ENCODE measurements at regions of chr20 and their contacts with region 1.

Region 1: DNA sequence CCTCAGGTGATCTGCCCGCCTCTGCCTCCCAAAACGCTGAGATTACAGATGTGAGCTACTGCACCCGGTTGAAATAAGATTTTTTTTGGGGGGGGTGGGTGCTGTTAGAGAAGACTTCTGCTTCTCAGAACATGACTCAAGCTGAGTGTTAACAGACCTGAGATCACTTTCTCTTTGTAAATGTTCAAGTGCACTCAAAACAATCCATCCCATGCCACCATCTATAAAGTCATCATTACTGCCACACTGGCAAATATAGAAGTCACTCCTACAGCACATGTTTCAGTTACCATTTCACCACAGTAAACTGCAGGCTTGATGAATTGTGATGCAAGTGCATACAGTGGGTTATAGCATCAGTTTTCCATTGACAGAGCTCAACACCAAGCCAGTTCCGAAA is 9.0 kb downstream of the VPS16 start:
- DNase-seq: no peak
- ATAC-seq: no peak
- H3K4me3 ChIP-seq: no peak overlapping the region
- H3K27ac ChIP-seq: no peak overlapping the region
- H3K4me1 ChIP-seq: no peaks in the 10 kb centered on the region
- H3K27me3 ChIP-seq: no peaks in the 10 kb centered on the region
- CTCF ChIP-seq: no peak

Region 2: DNA sequence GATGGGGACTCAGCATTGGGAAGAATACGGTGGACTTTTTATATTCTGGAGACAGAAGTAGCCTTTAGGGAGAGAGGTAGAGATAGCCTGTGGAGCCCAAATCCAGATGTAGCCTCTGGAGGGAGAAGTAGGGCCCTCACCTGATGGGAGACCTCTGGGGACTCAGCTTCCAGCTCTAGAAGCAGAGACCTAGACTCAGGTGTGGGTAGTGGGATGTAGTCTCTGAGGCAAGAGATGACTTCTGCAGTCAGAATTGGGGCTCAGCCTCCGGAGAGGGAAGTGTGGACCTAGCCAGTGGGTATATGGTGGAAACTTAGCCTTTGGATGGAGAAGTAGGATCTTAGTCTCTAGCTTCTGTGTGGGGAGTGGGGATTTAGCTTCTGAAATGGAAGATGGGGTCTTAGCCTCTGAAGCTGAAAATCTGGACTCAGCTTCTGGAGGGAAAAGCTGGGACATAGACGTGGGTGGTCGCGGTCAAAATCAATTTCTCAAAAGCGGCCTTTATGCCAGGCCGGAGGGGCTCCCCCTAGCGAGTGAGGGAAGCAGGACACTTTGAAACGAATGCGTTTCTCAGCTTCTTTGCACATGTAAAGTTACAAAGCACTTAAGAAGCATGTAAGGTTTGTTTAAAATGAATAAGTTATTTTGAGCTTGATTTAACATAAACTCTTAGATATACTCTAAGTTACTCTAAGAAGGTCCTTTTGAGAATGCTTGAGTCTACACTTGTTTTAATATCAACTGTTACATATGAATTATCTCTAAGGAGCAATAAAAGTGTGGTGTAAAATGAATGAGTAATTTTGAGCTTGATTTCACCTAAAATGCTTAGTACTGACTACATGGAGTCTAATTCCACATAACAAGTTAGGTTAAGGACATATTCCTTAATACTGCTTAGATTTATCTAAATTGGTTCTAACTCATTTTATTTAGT is 327.9 kb before region 1 on chr20:
- CTCF ChIA-PET with region 1: no interaction called
- POLR2A ChIA-PET with region 1: no interaction called
- intact Hi-C with region 1: no loop called
- DNase-seq: peak; percentile 63
- ATAC-seq: no peak
- H3K4me3 ChIP-seq: no peak overlapping the region
- H3K27ac ChIP-seq: no peak overlapping the region
- H3K4me1 ChIP-seq: no peaks in the 10 kb centered on the region
- H3K27me3 ChIP-seq: no peaks in the 10 kb centered on the region
- CTCF ChIP-seq: peak; percentile 95

Region 3: DNA sequence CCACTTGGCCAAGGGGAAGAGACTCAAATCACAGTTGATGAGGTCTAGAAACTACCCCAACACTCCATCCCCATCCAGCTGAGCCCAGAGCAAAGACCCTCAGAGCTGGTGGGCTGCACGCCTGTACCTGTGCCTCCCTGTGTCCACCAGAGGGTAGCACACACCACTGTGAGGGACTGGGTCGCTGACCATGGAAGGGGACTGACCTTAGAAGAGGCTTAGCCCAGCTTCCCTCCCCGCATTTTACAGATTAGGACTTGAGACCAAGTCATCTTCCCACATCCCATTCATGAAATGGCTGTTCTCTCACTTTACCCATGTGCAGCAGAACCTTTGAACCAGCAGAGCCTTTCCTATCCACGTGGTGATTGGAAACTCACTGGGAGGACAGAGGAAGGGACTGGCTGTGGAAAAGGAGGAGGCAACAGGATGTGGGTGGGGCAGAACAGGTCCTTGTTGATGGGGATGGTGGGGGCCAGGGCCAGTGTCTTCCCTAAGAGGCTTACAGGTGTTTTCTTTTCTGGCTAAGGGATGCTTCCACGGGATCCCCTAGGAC is 93.4 kb before region 1 on chr20:
- CTCF ChIA-PET with region 1: interaction called, 12 read pairs
- POLR2A ChIA-PET with region 1: no interaction called
- intact Hi-C with region 1: loop called (anchors 1 kb)
- DNase-seq: peak; percentile 71
- ATAC-seq: peak; percentile 60
- H3K4me3 ChIP-seq: no peak overlapping the region
- H3K27ac ChIP-seq: no peak overlapping the region
- H3K4me1 ChIP-seq: peaks cover 18% of the 10 kb centered on the region
- H3K27me3 ChIP-seq: no peaks in the 10 kb centered on the region
- CTCF ChIP-seq: peak; percentile 94